Activated CD8-positive, alpha-beta T cell treated with anti-CD3 and anti-CD28 coated beads, Interleukin-2, amount 10 ng/mL, durations not matched to agents 7 days and 5 days (primary cell): ENCODE measurements at regions of chr17 and their contacts with region 1.

Region 1: GRCh38 chr17:46826116-46826515 is 7.6 kb upstream of the WNT3 start:
- DNase-seq: no peak
- ATAC-seq: no peak
- H3K4me3 Mint-ChIP-seq: no peak overlapping the region
- H3K27ac Mint-ChIP-seq: no peak overlapping the region
- H3K4me1 Mint-ChIP-seq: peaks cover 6% of the 10 kb centered on the region
- H3K27me3 Mint-ChIP-seq: peaks cover 26% of the 10 kb centered on the region

Region 2: DNA sequence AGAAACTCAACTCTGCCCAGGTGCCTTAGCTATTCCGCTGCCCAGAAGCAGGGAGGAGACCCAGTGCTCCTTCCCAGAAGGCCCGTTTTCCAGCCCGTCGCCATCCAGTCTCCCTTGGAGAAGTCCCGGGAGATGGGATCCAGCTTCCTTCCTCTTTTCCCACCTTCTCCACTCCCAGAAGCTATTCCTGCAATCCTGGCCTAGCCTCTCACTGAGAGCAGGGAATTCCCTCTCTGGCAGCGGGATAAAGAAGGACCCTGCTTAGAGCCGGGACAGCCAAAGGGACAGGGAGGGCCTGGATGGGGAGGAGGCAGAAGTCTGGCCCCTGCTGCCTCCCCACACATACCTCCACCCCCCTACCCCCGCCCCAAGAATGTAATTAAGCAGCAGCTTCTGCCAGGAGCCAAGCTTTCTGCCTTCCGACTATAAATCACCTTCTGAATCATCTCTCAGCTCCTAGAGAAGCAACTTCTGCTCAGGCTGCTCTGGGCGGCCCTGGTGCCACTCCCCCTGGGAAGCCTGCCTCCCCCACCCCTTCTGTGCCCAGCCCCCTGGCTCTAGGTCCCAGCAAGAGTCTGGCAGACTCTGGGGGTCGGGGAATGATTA is 14.0 kb before region 1 on chr17:
- CTCF ChIA-PET with region 1: no interaction called
- POLR2A ChIA-PET with region 1: no interaction called
- DNase-seq: no peak
- ATAC-seq: no peak
- H3K4me3 Mint-ChIP-seq: no peak overlapping the region
- H3K27ac Mint-ChIP-seq: no peak overlapping the region
- H3K4me1 Mint-ChIP-seq: no peaks in the 10 kb centered on the region
- H3K27me3 Mint-ChIP-seq: peaks cover 30% of the 10 kb centered on the region

Region 3: GRCh38 chr17:46836500-46836899 is 10.4 kb after region 1 on chr17:
- CTCF ChIA-PET with region 1: interaction called, 18 read pairs
- POLR2A ChIA-PET with region 1: interaction called, 3 read pairs
- DNase-seq: no peak
- ATAC-seq: no peak
- H3K4me3 Mint-ChIP-seq: no peak overlapping the region
- H3K27ac Mint-ChIP-seq: no peak overlapping the region
- H3K4me1 Mint-ChIP-seq: peaks cover 8% of the 10 kb centered on the region
- H3K27me3 Mint-ChIP-seq: peaks cover 25% of the 10 kb centered on the region

Region 4: GRCh38 chr17:46859996-46860395 is 33.9 kb after region 1 on chr17:
- CTCF ChIA-PET with region 1: no interaction called
- POLR2A ChIA-PET with region 1: no interaction called
- DNase-seq: no peak
- ATAC-seq: no peak
- H3K4me3 Mint-ChIP-seq: no peak overlapping the region
- H3K27ac Mint-ChIP-seq: no peak overlapping the region
- H3K4me1 Mint-ChIP-seq: peaks cover 5% of the 10 kb centered on the region
- H3K27me3 Mint-ChIP-seq: peaks cover 22% of the 10 kb centered on the region